WTC11 (cell line): ENCODE measurements at regions of chr11 and their contacts with region 1.

Region 1: DNA sequence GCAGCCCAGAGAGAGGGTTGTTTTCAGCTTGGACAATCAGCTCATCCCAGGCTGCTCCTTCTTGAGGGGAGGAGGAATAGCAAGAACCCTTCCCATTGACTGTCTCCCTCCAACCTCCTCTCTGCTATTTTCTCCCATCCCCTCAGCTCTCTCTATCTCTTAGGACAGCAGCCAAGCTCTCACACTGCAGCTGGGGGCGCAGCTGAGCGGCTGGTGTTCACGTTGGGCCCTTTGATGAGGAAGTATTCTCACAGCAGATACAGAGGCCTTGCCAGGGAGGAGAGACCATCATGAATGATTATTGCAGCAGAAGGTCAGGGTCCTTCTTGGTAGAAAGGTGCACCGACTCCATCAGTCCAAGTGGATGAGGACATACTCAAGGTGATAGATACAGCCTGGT is 26.5 kb upstream of the CADM1 start:
- DNase-seq: peak; percentile 60
- ATAC-seq: peak; percentile 85
- H3K4me3 Mint-ChIP-seq: no peak overlapping the region
- H3K27ac Mint-ChIP-seq: no peak overlapping the region
- H3K4me1 Mint-ChIP-seq: peaks cover 38% of the 10 kb centered on the region
- H3K27me3 Mint-ChIP-seq: peaks cover 10% of the 10 kb centered on the region
- CTCF ChIP-seq: 0 out of 2 replicates have a peak, but pooled peaks have one; percentile 23

Region 2: DNA sequence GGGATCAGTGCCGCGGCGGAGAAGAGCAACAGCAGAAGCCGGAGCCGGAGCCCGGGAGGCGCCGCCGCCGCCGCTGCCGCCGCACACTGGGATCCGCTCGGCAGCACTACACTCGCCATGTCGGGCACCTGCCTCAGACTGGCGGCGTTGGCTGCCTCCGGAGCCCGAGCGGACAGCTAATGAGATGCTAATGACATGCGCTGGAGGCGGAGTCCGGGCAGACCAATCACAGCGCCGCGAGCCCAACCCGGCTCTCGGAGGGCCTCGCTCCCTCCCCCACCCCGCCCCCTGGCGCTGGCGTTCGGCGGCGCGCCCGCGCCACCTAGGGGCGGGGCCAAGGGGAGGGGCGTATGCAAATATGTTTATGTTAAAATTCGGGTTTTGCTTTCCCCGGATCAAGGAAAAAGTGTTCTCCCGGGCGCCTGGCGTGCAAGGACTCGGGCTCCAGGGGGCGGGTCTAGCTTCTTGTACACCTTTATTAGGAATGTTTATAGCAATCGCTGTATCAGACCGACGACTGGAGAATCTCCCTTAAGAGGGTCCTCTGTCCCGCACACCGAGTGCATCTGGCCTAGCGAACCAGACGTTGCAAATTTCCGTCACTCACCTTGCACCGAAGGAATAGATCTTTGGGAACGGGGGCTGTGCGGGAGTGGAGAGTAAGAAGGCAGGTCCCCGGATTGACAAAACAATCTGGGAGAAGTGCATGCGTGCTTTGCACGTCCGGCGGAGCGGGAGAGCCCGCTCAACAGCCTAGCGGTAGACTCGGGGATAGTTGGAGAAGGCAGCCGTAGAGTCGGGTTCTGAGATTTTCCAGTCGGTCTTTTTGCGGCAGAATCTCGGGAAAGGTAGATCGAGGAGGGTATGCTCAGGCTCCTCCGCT is 26.2 kb before region 1 on chr11 and contains the start of gene CADM1:
- CTCF ChIA-PET with region 1: interaction called, 11 read pairs
- POLR2A ChIA-PET with region 1: interaction called, 3 read pairs
- DNase-seq: peak; percentile 97
- ATAC-seq: peak; percentile 92
- H3K4me3 Mint-ChIP-seq: peak within 1 kb of the TSS; percentile 92
- H3K27ac Mint-ChIP-seq: peak within 1 kb of the TSS; percentile 97
- H3K4me1 Mint-ChIP-seq: peaks cover 7% of the 10 kb centered on the region
- H3K27me3 Mint-ChIP-seq: peaks cover 28% of the 10 kb centered on the region
- CTCF ChIP-seq: peak; percentile 14
- total RNA-seq, gene CADM1: 26.8 to 27.3 TPM (median 27.0 TPM) in 3 replicates

Region 3: DNA sequence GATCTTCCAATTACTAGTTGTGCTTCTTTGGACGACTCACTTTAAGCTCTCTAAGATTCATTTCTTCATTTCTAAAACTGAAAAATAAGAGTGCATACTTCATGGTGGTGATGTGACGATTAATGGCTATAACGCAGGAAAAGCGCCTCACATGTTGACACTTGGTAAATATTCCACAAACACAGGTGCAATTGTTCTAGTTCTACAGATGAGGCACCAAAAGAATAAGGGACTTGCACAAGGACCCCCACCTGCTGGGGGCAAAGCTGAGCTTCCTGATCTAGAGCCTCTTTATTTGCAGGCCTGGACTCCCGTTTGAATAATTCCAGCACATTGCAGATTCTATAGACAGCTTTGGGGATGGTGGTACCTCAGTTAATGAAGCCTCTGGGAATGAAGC is 11.8 kb before region 1 on chr11:
- CTCF ChIA-PET with region 1: interaction called, 10 read pairs
- POLR2A ChIA-PET with region 1: no interaction called
- DNase-seq: no peak
- ATAC-seq: no peak
- H3K4me3 Mint-ChIP-seq: no peak overlapping the region
- H3K27ac Mint-ChIP-seq: no peak overlapping the region
- H3K4me1 Mint-ChIP-seq: peaks cover 27% of the 10 kb centered on the region
- H3K27me3 Mint-ChIP-seq: no peaks in the 10 kb centered on the region; the same call in 1 of the 2 replicates
- CTCF ChIP-seq: no peak

Region 4: DNA sequence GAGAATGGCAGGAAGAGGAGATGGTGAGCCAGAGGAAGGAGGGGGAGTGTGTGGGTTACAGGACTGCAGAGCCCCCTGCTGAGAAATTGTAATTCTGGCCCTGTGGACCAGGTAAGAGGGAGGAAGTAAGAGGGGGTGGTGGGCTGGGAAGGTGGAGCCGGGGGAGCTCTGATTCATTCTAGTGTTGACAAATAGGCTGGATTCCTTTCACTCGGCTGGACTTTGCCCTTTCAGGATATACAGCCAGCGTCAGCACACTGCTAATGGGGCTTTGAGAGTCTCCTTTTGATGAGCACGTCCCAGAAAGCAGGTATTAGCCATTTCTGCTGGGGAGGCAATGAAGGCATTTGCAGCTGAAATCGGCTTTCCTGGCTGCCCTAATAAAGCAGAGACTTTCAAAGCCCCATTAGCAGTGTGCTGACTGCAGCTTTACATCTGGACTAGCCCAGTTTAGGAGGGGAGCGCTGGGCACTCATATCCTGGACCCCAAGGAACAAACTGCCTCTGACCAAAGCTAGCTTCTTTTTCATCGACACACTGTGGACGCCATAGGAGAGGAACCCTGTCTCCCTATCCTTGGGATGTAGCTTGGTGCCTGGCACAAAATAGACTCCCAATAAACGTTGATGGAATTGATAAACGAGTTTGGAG is 18.3 kb after region 1 on chr11:
- CTCF ChIA-PET with region 1: interaction called, 11 read pairs
- POLR2A ChIA-PET with region 1: no interaction called
- DNase-seq: peak; percentile 66
- ATAC-seq: peak; percentile 94
- H3K4me3 Mint-ChIP-seq: peak overlapping the region; percentile 26
- H3K27ac Mint-ChIP-seq: peak overlapping the region; percentile 62; the same call in 1 of the 2 replicates
- H3K4me1 Mint-ChIP-seq: peaks cover 37% of the 10 kb centered on the region
- H3K27me3 Mint-ChIP-seq: no peaks in the 10 kb centered on the region; the same call in 1 of the 2 replicates
- CTCF ChIP-seq: no peak

Region 5: GRCh38 chr11:115623021-115623451 is 92.3 kb after region 1 on chr11:
- CTCF ChIA-PET with region 1: no interaction called
- POLR2A ChIA-PET with region 1: no interaction called
- DNase-seq: no peak
- ATAC-seq: no peak
- H3K4me3 Mint-ChIP-seq: no peak overlapping the region
- H3K27ac Mint-ChIP-seq: no peak overlapping the region
- H3K4me1 Mint-ChIP-seq: no peaks in the 10 kb centered on the region
- H3K27me3 Mint-ChIP-seq: no peaks in the 10 kb centered on the region
- CTCF ChIP-seq: no peak